ENCODE measurements at regions of chr17 and their contacts with region 1.

Region 1: DNA sequence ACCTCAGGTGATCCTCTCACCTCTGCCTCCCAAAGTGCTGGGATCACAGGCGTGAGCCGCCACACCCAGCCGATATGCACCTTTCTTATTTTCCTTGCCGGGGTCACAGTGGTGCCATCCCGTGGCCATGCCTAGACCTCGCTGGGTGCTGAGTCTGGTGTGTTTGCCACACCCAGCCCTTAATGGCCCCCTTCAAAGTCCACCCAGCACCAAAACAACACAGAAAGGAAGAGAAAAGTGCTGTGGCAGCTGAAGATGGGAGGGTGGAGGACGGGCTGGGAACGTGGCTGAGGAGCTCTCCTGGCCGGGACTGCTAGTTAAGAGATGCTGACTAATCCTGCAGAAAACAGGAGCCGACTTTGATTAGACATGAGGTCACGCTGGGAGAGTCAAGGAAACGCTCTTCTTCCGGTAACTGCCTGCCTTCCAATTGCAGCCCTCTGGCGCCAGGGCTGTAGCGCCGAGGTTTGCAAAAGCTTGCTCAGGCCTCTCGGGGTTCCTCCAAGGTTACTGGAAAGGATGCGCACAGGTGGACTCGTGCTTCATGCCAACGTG is 10.9 kb downstream of the SLC43A2 start:
- DNase-seq: peak; percentile 58 to 71
- H3K4me3 ChIP-seq: no peak overlapping the region
- H3K27ac ChIP-seq: 0 out of 2 replicates have a peak overlapping the region, but pooled peaks have one; percentile 22
- H3K4me1 ChIP-seq: 0 out of 2 replicates have a peak, but pooled peaks cover 3% of the 10 kb centered on the region
- H3K27me3 ChIP-seq: no peaks in the 10 kb centered on the region
- CTCF ChIP-seq: no peak; the same call in 1 of the 2 replicates

Region 2: DNA sequence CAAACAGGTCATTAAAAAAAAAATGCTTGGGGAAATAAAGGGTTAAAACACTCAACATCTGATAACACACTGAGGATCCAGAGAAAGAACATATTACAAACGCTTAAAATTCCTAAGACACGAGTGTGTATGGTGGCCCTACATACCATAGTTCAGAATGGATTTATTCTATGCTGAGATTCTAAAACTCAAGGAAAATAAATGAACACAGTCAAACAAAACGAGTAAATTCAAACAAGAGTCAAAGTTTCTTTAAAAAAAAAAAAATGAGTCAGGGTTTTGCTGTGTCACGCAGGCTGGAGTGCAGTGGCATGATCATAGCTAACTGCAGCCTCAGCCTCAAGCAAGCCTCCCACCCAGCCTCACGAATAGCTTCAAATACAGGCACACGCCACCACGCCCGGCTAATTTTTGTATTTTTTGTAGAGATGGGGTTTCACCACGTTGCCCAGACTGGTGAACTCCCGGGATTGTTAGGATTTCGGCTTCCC is 179.1 kb before region 1 on chr17:
- CTCF ChIA-PET with region 1: no interaction called
- POLR2A ChIA-PET with region 1: interaction called, 11 read pairs
- intact Hi-C with region 1: no loop called
- DNase-seq: peak in 1 of 2 experiments; percentile 28
- H3K4me3 ChIP-seq: no peak overlapping the region
- H3K27ac ChIP-seq: peak overlapping the region; percentile 21
- H3K4me1 ChIP-seq: no peaks in the 10 kb centered on the region
- H3K27me3 ChIP-seq: no peaks in the 10 kb centered on the region
- CTCF ChIP-seq: no peak

Region 3: GRCh38 chr17:1566545-1567199 is 51.0 kb before region 1 on chr17:
- CTCF ChIA-PET with region 1: interaction called, 11 read pairs
- POLR2A ChIA-PET with region 1: no interaction called
- intact Hi-C with region 1: no loop called
- DNase-seq: no peak
- H3K4me3 ChIP-seq: no peak overlapping the region
- H3K27ac ChIP-seq: no peak overlapping the region
- H3K4me1 ChIP-seq: peaks cover 15% of the 10 kb centered on the region
- H3K27me3 ChIP-seq: no peaks in the 10 kb centered on the region
- CTCF ChIP-seq: no peak

Region 4: DNA sequence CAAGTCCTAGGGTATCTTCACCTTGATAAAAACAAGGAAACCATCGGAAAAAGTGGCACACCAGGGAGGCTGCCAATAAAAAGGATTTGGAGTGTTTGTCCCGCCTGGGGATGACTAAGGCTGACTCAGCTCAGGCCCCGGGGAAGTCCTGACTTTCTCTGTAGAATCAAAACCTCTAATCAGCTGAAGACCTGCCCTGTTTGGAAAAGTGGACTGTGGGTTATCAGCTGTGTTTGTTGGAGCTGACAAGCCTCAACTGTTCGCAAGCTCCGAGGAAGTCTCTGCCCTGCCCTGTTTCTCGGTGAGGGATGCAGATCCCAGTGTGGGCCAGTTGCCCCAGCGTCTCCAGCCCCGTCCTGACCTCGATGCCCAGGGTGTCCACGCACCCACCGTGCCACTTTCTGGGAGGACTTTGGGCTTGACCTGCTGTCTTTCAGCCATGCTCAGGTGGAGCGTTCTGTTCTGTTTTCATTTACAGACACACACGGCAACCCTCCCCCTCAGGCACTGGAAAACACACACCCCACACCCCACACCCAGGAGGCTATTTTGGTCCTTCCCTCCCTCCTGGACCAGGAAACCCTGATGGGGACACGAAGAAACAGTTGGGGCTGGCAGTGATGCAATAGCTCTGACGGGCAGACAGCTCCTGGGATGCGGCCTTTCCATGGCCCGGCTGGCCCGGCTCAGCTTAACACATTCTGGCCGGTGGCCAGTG is 27.5 kb before region 1 on chr17:
- CTCF ChIA-PET with region 1: no interaction called
- POLR2A ChIA-PET with region 1: no interaction called
- intact Hi-C with region 1: loop called (anchors 1 kb)
- DNase-seq: peak; percentile 84 to 95
- H3K4me3 ChIP-seq: peak overlapping the region; percentile 19; the same call in 1 of the 2 replicates
- H3K27ac ChIP-seq: peak overlapping the region; percentile 30
- H3K4me1 ChIP-seq: peaks cover 24% of the 10 kb centered on the region
- H3K27me3 ChIP-seq: no peaks in the 10 kb centered on the region
- CTCF ChIP-seq: no peak

Region 5: GRCh38 chr17:2401426-2402221 is 783.9 kb after region 1 on chr17:
- CTCF ChIA-PET with region 1: no interaction called
- POLR2A ChIA-PET with region 1: no interaction called
- intact Hi-C with region 1: no loop called
- DNase-seq: peak; percentile 97 to 100
- H3K4me3 ChIP-seq: peak overlapping the region; percentile 96
- H3K27ac ChIP-seq: peak overlapping the region; percentile 96
- H3K4me1 ChIP-seq: peaks cover 65% of the 10 kb centered on the region
- H3K27me3 ChIP-seq: no peaks in the 10 kb centered on the region
- CTCF ChIP-seq: no peak

Measured in PC-9 (cell line).